Calu3 (cell line): ENCODE measurements at regions of chr1 and their contacts with region 1.

Region 1: GRCh38 chr1:158013840-158014730 is 20.6 kb downstream of the KIRREL1 start:
- DNase-seq: no peak
- H3K4me3 Mint-ChIP-seq: no peak overlapping the region
- H3K27ac Mint-ChIP-seq: no peak overlapping the region
- H3K4me1 Mint-ChIP-seq: peaks cover 55% of the 10 kb centered on the region
- H3K27me3 Mint-ChIP-seq: no peaks in the 10 kb centered on the region
- CTCF ChIP-seq: no peak

Region 2: DNA sequence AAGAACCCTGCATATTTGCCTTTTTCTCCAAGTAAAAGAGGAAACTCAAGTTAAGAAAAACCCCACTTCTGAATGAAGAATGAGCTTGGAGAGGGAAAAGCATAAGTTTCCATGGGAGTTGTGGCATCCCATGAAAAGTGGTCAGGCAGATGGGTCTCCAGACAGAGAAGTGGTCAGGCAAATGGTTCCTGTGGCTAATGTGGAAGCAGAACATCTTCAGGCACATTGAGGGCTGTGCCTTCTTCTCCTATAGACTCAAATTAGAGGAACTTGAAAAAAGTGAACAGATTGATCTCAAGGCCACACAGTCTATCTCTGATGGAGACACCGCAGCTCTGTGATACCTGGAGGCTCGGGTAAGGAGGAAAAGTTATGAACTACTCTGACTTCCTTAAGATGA is 76.3 kb before region 1 on chr1:
- CTCF ChIA-PET with region 1: interaction called, 11 read pairs
- intact Hi-C with region 1: no loop called
- DNase-seq: no peak
- H3K4me3 Mint-ChIP-seq: no peak overlapping the region
- H3K27ac Mint-ChIP-seq: no peak overlapping the region
- H3K4me1 Mint-ChIP-seq: no peaks in the 10 kb centered on the region
- H3K27me3 Mint-ChIP-seq: peaks cover 22% of the 10 kb centered on the region
- CTCF ChIP-seq: no peak

Region 3: DNA sequence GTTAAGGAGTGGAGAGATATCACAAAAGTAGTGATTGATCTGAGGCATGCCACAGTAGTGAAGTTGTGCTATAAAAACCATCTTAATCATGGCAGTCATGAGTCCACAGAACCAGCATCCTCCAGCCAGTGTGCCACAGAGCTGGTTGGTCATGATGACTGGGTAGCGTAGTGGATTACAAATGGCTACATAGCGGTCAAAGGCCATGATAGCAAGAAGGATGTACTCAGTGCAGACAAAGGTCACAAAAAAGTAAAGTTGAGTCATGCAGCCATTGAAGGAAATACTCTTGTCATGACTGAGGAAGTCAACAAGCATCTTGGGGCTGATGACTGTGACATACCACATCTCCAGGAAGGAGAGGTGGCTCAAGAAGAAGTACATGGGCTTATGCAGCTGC is 533.4 kb after region 1 on chr1:
- CTCF ChIA-PET with region 1: no interaction called
- intact Hi-C with region 1: no loop called
- DNase-seq: no peak
- H3K4me3 Mint-ChIP-seq: no peak overlapping the region
- H3K27ac Mint-ChIP-seq: no peak overlapping the region
- H3K4me1 Mint-ChIP-seq: no peaks in the 10 kb centered on the region
- H3K27me3 Mint-ChIP-seq: peaks cover 22% of the 10 kb centered on the region
- CTCF ChIP-seq: no peak